CD4-positive, alpha-beta T cell (primary cell): ENCODE measurements at regions of chr11 and their contacts with region 1.

Region 1: DNA sequence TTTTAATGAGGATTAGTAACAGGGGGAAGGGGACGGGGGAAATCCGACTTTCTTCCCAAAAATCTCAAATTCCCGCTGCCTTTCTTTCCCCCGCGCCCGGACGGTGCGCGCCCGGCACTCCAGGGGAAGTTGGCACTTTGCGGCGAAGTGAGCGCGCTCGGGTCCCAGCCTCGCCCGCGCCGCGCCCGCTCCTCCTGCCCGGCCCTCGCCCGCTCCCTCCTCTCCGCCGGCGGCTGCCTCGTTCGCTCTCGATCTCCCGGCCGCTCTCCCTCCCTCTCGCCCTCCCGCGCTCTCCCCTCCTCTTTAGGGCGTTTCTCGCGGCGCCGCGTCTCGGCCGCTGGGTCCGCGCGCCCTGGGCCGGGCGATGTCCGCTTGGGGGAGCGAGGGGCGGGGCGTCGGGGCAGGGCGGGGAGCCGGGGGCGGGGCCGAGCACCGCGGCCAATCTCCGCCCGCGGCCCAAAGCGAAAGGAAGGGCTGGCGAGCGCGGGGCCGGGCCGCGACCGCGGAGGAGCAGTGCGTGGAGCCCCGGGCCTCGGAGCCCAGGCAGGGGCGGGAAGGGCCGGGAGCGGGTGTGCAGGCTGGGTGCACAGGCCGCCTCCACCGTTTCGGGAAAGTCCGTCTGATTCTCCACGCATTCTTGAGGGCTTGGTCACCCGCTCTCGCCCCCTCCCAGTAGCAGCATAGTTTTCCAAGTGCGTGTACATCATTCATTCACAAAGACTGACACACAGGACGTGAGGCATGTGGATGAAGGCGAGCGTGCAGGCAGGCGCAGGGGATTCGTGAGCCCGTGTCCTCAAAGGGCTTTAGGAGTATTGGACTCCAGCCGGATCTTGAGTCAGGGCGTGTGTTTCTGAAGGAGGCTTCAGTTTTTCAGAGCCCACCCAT is 65.1 kb downstream of the ETS1 start:
- DNase-seq: peak; percentile 73 to 95 (median 90)
- ATAC-seq: peak; percentile 47
- H3K4me3 ChIP-seq: peak overlapping the region; percentile 89
- H3K4me3 Mint-ChIP-seq: peak overlapping the region; percentile 93
- H3K27ac ChIP-seq: peak overlapping the region; percentile 83 to 96
- H3K27ac Mint-ChIP-seq: peak overlapping the region; percentile 99
- H3K4me1 ChIP-seq: peaks cover 41% of the 10 kb centered on the region
- H3K4me1 Mint-ChIP-seq: peaks cover 47% of the 10 kb centered on the region
- H3K27me3 ChIP-seq: no peaks in the 10 kb centered on the region
- H3K27me3 Mint-ChIP-seq: no peaks in the 10 kb centered on the region
- CTCF ChIP-seq: no peak

Region 2: DNA sequence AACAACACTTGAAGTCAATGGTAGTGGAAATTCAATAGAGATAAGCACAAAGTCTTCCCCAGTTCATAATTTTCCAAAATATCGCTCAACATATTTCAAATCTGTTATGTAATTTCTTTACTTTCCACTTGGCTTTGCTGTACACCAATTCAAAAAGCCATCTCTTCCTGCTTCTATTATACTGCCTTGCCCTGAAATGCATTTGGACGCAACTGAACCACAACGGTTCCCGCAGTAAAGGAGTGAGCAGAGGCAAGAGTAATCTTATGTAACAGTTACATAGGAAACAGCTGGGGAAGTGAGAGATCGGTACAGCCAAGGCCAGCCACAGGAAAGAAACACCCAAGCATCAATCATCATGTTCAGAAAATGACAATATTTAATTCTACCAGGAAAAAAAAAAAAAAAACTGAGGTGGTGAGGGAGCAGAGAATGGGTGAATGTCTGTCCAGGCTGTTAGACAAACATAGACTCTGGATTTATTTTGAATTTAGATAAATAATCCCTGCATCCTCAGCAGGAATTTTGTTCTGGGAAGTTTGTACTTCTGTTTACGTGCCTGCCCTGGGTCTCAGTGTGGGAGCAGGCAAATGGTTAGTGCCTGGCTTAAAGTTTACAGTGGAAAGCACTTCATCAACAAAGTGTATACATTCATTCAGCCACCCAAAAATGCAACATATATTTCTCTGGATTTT is 327.1 kb before region 1 on chr11:
- CTCF ChIA-PET with region 1: interaction called, 4 read pairs
- POLR2A ChIA-PET with region 1: no interaction called
- intact Hi-C with region 1: loop called in 1 of 2 experiments (anchors 5 kb)
- DNase-seq: peak in 13 of 14 experiments; percentile 9 to 86 (median 39)
- ATAC-seq: peak; percentile 98
- H3K4me3 ChIP-seq: no peak overlapping the region
- H3K4me3 Mint-ChIP-seq: peak overlapping the region; percentile 47
- H3K27ac ChIP-seq: peak overlapping the region in 1 of 2 donors; percentile 33
- H3K27ac Mint-ChIP-seq: peak overlapping the region; percentile 60
- H3K4me1 ChIP-seq: peaks cover 9% of the 10 kb centered on the region
- H3K4me1 Mint-ChIP-seq: peaks cover 35% of the 10 kb centered on the region
- H3K27me3 ChIP-seq: no peaks in the 10 kb centered on the region
- H3K27me3 Mint-ChIP-seq: no peaks in the 10 kb centered on the region
- CTCF ChIP-seq: peak; percentile 58

Region 3: DNA sequence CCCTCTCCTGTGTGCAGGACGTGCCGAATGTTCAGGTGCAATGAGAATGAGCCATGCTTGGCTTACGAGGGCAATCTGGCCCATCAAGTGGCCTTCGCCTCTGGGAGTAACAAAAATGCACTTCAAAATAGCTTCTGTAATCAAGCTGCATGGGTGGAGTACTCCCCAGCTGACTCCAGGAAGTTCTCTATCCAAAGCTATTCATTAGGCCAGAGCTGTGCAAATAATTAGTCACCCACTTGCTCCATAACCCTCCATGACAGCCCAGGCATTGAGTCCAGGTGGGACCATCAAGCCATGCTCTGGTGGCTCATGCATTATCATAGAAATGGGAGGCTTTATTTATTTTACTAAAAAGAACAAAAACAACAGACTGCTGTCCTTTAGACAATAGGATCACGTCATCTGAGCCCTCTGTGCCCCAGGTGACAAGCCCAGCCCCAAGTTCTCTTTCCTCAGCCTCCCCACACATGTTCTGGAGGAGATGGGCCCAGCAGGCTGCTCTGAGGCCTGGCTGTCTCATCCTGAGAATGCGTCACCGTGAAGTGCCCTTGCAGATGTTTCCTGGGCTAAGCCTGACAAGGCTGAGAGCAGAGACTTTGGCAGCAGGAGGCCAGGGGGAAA is 179.7 kb before region 1 on chr11:
- CTCF ChIA-PET with region 1: interaction called, 4 read pairs
- POLR2A ChIA-PET with region 1: interaction called, 10 read pairs
- intact Hi-C with region 1: loop called in 1 of 2 experiments (anchors 5 kb)
- DNase-seq: peak in 11 of 14 experiments; percentile 24 to 83 (median 67)
- ATAC-seq: peak; percentile 67
- H3K4me3 ChIP-seq: no peak overlapping the region
- H3K4me3 Mint-ChIP-seq: peak overlapping the region; percentile 73
- H3K27ac ChIP-seq: peak overlapping the region; percentile 79 to 88
- H3K27ac Mint-ChIP-seq: peak overlapping the region; percentile 99
- H3K4me1 ChIP-seq: peaks cover 65% of the 10 kb centered on the region
- H3K4me1 Mint-ChIP-seq: peaks cover 97% of the 10 kb centered on the region
- H3K27me3 ChIP-seq: no peaks in the 10 kb centered on the region
- H3K27me3 Mint-ChIP-seq: no peaks in the 10 kb centered on the region
- CTCF ChIP-seq: no peak

Region 4: GRCh38 chr11:128482512-128483191 is 39.6 kb before region 1 on chr11:
- CTCF ChIA-PET with region 1: interaction called, 3 read pairs
- POLR2A ChIA-PET with region 1: interaction called, 611 read pairs
- intact Hi-C with region 1: no loop called
- DNase-seq: peak in 6 of 14 experiments; percentile 51 to 87 (median 70)
- ATAC-seq: peak; percentile 58
- H3K4me3 ChIP-seq: peak overlapping the region; percentile 46
- H3K4me3 Mint-ChIP-seq: peak overlapping the region; percentile 76
- H3K27ac ChIP-seq: peak overlapping the region; percentile 92 to 94
- H3K27ac Mint-ChIP-seq: peak overlapping the region; percentile 99
- H3K4me1 ChIP-seq: peaks cover 95% of the 10 kb centered on the region
- H3K4me1 Mint-ChIP-seq: peaks cover 99% of the 10 kb centered on the region
- H3K27me3 ChIP-seq: no peaks in the 10 kb centered on the region
- H3K27me3 Mint-ChIP-seq: no peaks in the 10 kb centered on the region
- CTCF ChIP-seq: no peak

Region 5: DNA sequence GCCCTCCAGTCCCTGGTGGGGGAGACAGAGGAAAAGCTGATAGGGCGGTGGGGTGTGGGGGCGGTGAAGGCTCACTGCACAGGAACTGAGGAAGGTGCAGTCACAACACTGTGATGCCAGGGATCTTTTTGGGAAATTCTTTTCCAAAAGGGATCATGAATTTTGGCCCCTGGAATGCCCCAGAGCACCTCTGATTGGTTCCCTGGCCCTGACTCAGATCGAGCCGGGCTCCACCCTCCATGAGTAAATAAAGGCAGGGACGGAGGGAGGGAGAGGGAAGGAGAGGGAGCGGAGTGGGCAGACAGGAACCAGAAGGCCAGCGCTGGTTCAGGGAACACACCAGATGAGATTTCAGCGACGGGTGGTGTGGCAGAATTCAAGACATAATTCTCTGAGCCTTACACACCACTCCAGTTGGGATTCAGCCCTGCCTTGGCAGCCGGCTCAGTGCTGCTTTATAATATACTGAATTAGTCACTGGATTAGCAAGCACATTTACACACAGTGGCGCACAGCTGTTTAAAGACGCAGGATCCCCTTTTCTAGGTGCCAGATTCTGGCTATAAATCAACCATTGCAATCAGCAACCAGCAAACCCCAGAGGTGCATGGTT is 15.2 kb before region 1 on chr11:
- CTCF ChIA-PET with region 1: interaction called, 6 read pairs
- POLR2A ChIA-PET with region 1: interaction called, 530 read pairs
- intact Hi-C with region 1: loop called (anchors 1 to 2 kb)
- DNase-seq: peak in 7 of 14 experiments; percentile 38 to 62 (median 53)
- ATAC-seq: peak; percentile 28
- H3K4me3 ChIP-seq: peak overlapping the region; percentile 89
- H3K4me3 Mint-ChIP-seq: peak overlapping the region; percentile 93
- H3K27ac ChIP-seq: peak overlapping the region; percentile 68 to 93
- H3K27ac Mint-ChIP-seq: peak overlapping the region; percentile 99
- H3K4me1 ChIP-seq: peaks cover 86% of the 10 kb centered on the region
- H3K4me1 Mint-ChIP-seq: peaks cover 100% of the 10 kb centered on the region
- H3K27me3 ChIP-seq: no peaks in the 10 kb centered on the region
- H3K27me3 Mint-ChIP-seq: no peaks in the 10 kb centered on the region
- CTCF ChIP-seq: no peak

Region 6: GRCh38 chr11:128610721-128611617 is 88.7 kb after region 1 on chr11:
- CTCF ChIA-PET with region 1: interaction called, 6 read pairs
- POLR2A ChIA-PET with region 1: interaction called, 25 read pairs
- intact Hi-C with region 1: no loop called
- DNase-seq: peak; percentile 45 to 80 (median 66)
- ATAC-seq: peak; percentile 90
- H3K4me3 ChIP-seq: peak overlapping the region; percentile 12
- H3K4me3 Mint-ChIP-seq: peak overlapping the region; percentile 75
- H3K27ac ChIP-seq: peak overlapping the region; percentile 51 to 82
- H3K27ac Mint-ChIP-seq: peak overlapping the region; percentile 95
- H3K4me1 ChIP-seq: peaks cover 42% of the 10 kb centered on the region
- H3K4me1 Mint-ChIP-seq: peaks cover 78% of the 10 kb centered on the region
- H3K27me3 ChIP-seq: no peaks in the 10 kb centered on the region
- H3K27me3 Mint-ChIP-seq: no peaks in the 10 kb centered on the region
- CTCF ChIP-seq: no peak

Region 7: GRCh38 chr11:128725630-128726319 is 203.5 kb after region 1 on chr11:
- CTCF ChIA-PET with region 1: no interaction called
- POLR2A ChIA-PET with region 1: interaction called, 4 read pairs
- intact Hi-C with region 1: loop called (anchors 10 kb)
- DNase-seq: peak in 12 of 14 experiments; percentile 27 to 92 (median 50)
- ATAC-seq: peak; percentile 61
- H3K4me3 ChIP-seq: peak overlapping the region; percentile 33
- H3K4me3 Mint-ChIP-seq: peak overlapping the region; percentile 80
- H3K27ac ChIP-seq: peak overlapping the region; percentile 4 to 63
- H3K27ac Mint-ChIP-seq: peak overlapping the region; percentile 90
- H3K4me1 ChIP-seq: peaks cover 100% of the 10 kb centered on the region
- H3K4me1 Mint-ChIP-seq: peaks cover 99% of the 10 kb centered on the region
- H3K27me3 ChIP-seq: no peaks in the 10 kb centered on the region
- H3K27me3 Mint-ChIP-seq: peaks cover 5% of the 10 kb centered on the region
- CTCF ChIP-seq: no peak